Dorsolateral prefrontal cortex (tissue), 120 donors: ENCODE measurements at regions of chr10 and their contacts with region 1.

Region 1: DNA sequence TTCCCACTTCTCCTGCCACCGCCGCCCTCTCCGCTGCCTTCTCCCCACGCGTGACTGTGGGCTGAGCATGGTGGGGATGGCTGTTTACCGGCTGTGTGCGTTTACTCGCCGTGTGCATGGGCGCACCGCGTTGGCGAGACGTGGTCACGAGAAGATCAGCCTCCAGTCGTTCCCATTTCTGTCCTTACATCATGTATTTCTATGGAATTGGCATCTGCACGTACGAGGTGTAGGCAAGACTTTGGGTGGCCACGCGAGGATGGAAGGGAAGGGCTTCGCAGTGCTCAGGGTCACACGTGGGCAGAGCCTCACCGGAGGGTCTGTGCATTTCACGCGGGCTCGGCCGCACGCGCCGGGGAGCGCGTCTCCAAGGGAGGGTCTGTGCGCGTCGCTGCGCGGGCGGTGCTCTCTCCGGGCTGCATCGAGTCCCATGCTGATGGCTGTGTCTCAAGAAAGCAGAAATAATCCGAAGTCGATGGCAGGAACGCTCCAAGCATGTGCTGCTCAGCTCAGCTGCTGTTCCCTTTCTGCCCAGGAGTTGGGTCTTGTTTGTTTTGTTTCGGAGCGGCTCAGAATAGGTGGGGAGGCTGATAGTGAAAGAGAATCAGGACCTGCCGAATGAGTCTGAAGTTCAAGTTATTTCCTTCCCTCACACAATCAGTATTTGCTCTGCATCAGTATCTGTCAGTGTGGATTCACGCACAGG is 973 bp downstream of the CAMK1D start:
- DNase-seq: peak in 7 of 10 donors; percentile 32 to 57 (median 53)
- H3K4me3 ChIP-seq: peak overlapping the region; percentile 42 to 88 (median 76)
- H3K27ac ChIP-seq: peak overlapping the region in 56 of 59 donors; percentile 39 to 92 (median 83)
- H3K27me3 ChIP-seq: no peaks in the 10 kb centered on the region
- CTCF ChIP-seq: no peak

Region 2: GRCh38 chr10:12389154-12389734 is 38.9 kb after region 1 on chr10:
- intact Hi-C with region 1: loop called in 1 of 2 experiments (anchors 5 kb)
- DNase-seq: peak in 2 of 10 donors; percentile 25 to 87
- H3K4me3 ChIP-seq: peak overlapping the region in 30 of 59 donors; percentile 2 to 44 (median 24)
- H3K27ac ChIP-seq: peak overlapping the region in 34 of 59 donors; percentile 1 to 95 (median 40)
- H3K27me3 ChIP-seq: no peaks in the 10 kb centered on the region
- CTCF ChIP-seq: no peak

Region 3: GRCh38 chr10:12396567-12396966 is 46.2 kb after region 1 on chr10:
- intact Hi-C with region 1: loop called in 1 of 2 experiments (anchors 2 kb)
- DNase-seq: peak in 5 of 10 donors; percentile 36 to 76 (median 52)
- H3K4me3 ChIP-seq: no peak overlapping the region
- H3K27ac ChIP-seq: peak overlapping the region in 36 of 59 donors; percentile 6 to 69 (median 42)
- H3K27me3 ChIP-seq: no peaks in the 10 kb centered on the region
- CTCF ChIP-seq: no peak

Region 4: DNA sequence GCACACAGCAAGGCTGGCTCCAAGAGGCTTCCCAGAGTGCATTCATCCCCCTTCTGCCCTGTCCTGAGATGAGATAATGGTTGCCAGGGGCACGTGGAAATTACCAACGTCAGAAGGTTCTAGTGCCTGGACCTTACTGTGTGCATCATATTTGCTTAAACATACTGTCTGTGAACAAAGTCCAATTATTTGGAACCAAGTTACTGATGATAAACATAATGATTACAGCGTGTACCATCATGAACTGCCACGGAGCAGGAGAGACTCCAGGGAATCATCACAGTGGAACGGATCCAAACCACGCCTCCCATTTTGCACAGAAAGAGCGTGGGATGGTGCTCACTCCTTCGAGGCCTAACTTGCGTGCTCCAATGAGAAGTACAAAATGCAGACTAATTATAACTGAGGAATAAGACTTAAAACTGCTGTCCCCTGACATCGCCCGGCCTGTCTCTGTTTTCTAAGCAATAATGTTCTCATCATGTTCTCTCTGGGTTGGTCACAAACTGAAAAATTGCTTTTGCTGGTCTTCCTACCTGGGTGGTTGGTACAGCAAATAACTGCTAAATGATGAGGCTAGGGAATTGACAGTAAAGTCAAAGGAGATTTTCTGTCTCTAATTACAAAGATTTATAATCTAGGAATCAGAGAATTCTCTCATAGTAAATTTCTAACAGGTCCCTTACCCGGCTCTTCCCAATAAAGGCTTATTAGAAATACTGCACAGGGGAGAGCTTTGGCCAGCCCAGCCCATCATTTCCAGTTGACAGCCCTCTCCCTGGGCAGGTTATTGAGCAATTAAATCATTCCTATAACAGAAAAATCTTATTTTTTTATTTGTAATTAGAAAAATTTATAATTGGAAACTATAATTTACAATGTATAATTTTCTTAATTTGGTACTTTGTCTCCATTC is 181.2 kb after region 1 on chr10:
- intact Hi-C with region 1: no loop called
- DNase-seq: peak in 2 of 10 donors; percentile 45 to 57
- H3K4me3 ChIP-seq: no peak overlapping the region
- H3K27ac ChIP-seq: peak overlapping the region in 3 of 59 donors; percentile 17 to 28 (median 27)
- H3K27me3 ChIP-seq: no peaks in the 10 kb centered on the region
- CTCF ChIP-seq: no peak